AG04450 (cell line): ENCODE measurements at regions of chr20 and their contacts with region 1.

Region 1: DNA sequence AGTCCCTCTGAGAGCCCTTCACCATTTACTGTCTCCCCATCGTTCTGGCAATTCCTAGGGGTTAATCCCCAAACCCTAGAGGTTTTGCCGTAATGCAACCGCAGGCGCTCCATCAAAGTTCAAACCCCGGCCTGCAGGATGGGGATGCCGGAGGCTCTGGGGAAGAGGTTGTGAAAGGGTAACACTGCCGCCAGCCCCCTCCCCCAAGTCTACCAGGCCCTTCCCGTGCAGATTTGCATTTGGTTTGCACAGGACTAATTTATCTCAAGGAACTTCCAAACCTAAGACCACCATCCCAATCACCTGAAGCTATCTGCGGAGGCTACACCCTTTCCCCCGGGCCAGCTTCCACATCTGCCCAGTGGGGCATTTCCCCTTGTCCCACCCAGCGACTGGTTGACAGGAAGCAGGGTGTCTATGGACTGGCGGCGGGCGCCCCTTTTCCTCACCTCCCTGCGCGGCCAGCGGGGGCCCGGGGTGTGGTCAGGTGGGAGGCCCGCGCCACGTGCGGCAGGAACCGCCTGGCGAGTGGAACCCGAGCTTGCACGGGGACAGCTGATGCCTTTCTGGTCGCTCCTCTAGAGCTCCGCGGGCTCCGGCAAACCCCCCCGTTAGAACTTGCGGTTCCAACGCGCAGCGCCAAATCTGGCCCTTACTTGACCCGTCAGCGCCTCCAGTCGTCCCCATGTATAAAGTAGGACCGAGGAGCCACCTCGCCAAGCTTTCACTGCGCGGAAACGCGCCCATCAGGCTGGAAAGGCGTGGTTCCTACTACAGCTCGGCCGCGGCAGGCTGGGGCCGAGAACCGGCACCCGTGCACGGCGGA is 9.4 kb upstream of the SLC4A11 start:
- DNase-seq: no peak
- H3K4me3 ChIP-seq: peak overlapping the region; percentile 7; the same call in 1 of the 2 replicates
- H3K27ac ChIP-seq: no peak overlapping the region
- H3K27me3 ChIP-seq: peaks cover 32% of the 10 kb centered on the region
- CTCF ChIP-seq: no peak

Region 2: GRCh38 chr20:3193806-3194616 is 54.4 kb before region 1 on chr20:
- CTCF ChIA-PET with region 1: no interaction called
- POLR2A ChIA-PET with region 1: interaction called, 12 read pairs
- DNase-seq: no peak
- H3K4me3 ChIP-seq: no peak overlapping the region
- H3K27ac ChIP-seq: no peak overlapping the region
- H3K27me3 ChIP-seq: no peaks in the 10 kb centered on the region
- CTCF ChIP-seq: no peak

Region 3: DNA sequence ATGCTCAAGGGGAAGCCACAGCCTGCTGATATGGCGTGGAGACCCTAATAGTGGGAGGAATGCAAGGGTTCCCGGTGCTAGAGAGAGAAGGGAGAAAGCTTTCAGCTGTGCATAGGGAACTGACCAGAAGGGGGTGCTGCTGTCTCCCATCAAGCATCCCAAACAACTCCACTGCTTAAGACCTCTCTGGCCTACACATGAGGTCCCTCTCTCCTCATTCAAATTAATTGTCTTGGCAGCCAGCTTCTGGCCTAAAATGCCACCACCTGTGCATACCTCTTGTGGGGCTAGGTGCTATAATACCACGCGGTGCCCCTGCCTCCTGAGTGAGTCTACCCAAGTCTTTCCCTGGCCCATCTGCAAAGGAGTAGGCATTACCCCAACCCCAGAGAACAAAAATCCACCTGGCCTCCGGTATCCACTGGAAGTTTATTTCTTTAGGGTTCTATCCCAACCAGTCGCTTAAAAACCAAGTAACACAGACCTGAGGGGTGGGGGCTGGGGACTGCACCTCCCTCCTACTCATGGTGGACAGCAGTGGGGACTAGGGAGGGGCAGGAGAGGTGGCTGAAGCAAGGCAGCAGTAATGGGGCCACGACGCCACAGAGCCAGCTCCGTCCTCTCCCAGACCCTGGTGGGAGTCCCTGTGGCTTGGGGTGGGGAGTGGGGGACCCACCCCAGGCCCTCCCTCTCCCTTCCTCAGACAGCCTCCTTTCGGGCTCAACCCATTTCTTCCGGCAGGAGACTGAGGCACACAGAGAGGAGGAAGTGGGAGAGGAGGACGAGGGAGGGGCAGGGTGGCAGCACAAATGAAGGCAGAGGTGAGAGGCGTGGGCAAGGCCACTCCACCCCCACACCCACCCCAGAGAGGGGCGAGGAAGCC is 505.0 kb after region 1 on chr20:
- CTCF ChIA-PET with region 1: no interaction called
- POLR2A ChIA-PET with region 1: no interaction called
- DNase-seq: peak; percentile 43
- H3K4me3 ChIP-seq: no peak overlapping the region
- H3K27ac ChIP-seq: peak overlapping the region; percentile 21
- H3K27me3 ChIP-seq: no peaks in the 10 kb centered on the region
- CTCF ChIP-seq: peak; percentile 85